Natural killer cell (primary cell): ENCODE measurements at regions of chr20 and their contacts with region 1.

Region 1: GRCh38 chr20:32535953-32536823 is 48.9 kb downstream of the NOL4L start:
- DNase-seq: peak; percentile 63 to 93
- ATAC-seq: peak; percentile 50 to 79 (median 66)
- H3K4me3 ChIP-seq: peak overlapping the region; percentile 38
- H3K4me3 Mint-ChIP-seq: peak overlapping the region; percentile 85
- H3K27ac ChIP-seq: peak overlapping the region; percentile 95
- H3K27ac Mint-ChIP-seq: peak overlapping the region; percentile 89 to 91
- H3K4me1 ChIP-seq: peaks cover 75% of the 10 kb centered on the region
- H3K4me1 Mint-ChIP-seq: peaks cover 66 to 81% of the 10 kb centered on the region in 2 donors
- H3K27me3 ChIP-seq: no peaks in the 10 kb centered on the region
- H3K27me3 Mint-ChIP-seq: no peaks in the 10 kb centered on the region
- CTCF ChIP-seq: no peak

Region 2: DNA sequence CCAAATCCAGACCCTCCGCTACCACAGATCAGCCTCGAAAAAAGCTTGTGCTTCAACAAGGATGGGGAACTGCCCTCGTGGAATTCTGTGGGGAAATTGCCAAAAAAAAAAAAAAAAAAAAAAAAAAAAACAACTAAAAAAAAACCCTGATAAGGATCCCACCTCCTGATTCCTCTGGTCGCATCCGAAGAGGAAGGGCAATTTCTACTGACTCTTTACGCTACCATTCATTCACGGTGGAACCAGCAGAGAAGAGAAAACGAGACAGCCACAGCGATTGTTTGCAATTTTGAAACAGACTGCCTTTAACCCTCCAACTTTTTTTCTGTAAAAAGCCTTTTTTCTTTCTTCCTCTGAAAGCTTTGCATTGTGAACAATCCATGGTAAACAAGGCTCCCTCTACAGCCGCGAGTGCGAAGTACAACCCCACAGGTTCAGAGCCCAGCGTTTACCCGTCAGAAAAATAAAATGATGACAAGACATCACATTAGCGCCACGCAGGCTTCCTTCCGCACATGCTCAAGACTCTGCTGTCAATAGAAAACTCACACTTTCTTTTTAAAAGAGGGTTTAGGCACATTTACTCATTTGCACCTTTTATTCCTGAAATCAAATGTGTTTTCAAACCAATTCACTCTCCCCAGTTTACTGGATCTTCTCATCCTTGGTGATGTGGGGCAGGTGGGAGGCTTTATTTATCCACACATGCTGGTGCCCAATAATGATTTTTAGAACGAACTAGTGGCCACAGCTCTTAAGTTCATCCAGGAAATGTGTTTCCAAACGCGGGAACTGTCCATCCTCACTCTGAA is 51.0 kb before region 1 on chr20:
- intact Hi-C with region 1: loop called (anchors 10 kb)
- DNase-seq: peak; percentile 72 to 92
- ATAC-seq: peak; percentile 79 to 87 (median 79)
- H3K4me3 ChIP-seq: peak overlapping the region; percentile 32
- H3K4me3 Mint-ChIP-seq: peak overlapping the region; percentile 97
- H3K27ac ChIP-seq: peak overlapping the region; percentile 49
- H3K27ac Mint-ChIP-seq: peak overlapping the region; percentile 88 to 91
- H3K4me1 ChIP-seq: peaks cover 34% of the 10 kb centered on the region
- H3K4me1 Mint-ChIP-seq: peaks cover 45 to 59% of the 10 kb centered on the region in 2 donors
- H3K27me3 ChIP-seq: no peaks in the 10 kb centered on the region
- H3K27me3 Mint-ChIP-seq: no peaks in the 10 kb centered on the region
- CTCF ChIP-seq: peak; percentile 74

Region 3: GRCh38 chr20:32521780-32522525 is 14.2 kb before region 1 on chr20:
- intact Hi-C with region 1: loop called (anchors 2 kb)
- DNase-seq: peak; percentile 65 to 86
- ATAC-seq: peak; percentile 74 to 89 (median 89)
- H3K4me3 ChIP-seq: no peak overlapping the region
- H3K4me3 Mint-ChIP-seq: no peak overlapping the region
- H3K27ac ChIP-seq: peak overlapping the region; percentile 22
- H3K27ac Mint-ChIP-seq: peak overlapping the region; percentile 80
- H3K4me1 ChIP-seq: peaks cover 61% of the 10 kb centered on the region
- H3K4me1 Mint-ChIP-seq: peaks cover 52 to 57% of the 10 kb centered on the region in 2 donors
- H3K27me3 ChIP-seq: no peaks in the 10 kb centered on the region
- H3K27me3 Mint-ChIP-seq: no peaks in the 10 kb centered on the region
- CTCF ChIP-seq: peak; percentile 83

Region 4: DNA sequence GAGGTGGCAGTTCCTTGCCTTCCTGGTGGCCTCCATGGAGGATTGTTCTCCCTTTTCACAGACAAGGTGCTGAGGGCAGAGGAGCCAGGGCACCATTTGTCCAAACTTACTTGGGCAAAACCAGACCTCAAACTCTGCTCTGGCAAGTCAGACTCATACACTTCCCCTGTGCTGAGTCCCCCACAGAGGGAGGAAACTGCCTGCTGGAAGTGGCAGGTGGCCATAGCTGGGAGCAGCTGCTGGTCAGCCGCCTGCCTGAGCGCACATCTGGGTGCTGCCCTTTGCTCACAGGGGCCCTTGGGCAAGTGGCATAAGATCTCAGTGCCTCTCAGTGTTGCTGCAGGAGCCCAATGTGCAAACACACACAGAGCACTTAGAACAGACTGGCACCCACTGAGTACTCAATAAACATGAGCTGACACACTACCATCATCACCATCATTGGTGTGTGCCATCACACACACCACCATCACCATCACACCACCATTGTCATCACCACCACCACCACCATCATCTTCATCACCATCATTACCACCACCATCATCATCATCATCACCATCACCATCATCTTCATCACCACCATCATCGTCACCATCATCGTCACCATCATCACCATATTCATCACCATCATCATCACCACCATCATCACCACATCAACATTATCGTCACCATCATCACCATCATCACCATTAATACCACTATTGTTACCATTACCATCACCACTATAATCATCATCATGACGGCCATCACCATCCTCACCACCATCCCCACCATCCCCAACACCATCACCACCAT is 31.4 kb after region 1 on chr20:
- intact Hi-C with region 1: loop called (anchors 1 kb)
- DNase-seq: no peak
- ATAC-seq: peak in 2 of 3 donors; percentile 16 to 32
- H3K4me3 ChIP-seq: no peak overlapping the region
- H3K4me3 Mint-ChIP-seq: no peak overlapping the region
- H3K27ac ChIP-seq: peak overlapping the region; percentile 75
- H3K27ac Mint-ChIP-seq: no peak overlapping the region
- H3K4me1 ChIP-seq: peaks cover 95% of the 10 kb centered on the region
- H3K4me1 Mint-ChIP-seq: peaks cover 27 to 59% of the 10 kb centered on the region in 2 donors
- H3K27me3 ChIP-seq: no peaks in the 10 kb centered on the region
- H3K27me3 Mint-ChIP-seq: no peaks in the 10 kb centered on the region
- CTCF ChIP-seq: no peak

Region 5: DNA sequence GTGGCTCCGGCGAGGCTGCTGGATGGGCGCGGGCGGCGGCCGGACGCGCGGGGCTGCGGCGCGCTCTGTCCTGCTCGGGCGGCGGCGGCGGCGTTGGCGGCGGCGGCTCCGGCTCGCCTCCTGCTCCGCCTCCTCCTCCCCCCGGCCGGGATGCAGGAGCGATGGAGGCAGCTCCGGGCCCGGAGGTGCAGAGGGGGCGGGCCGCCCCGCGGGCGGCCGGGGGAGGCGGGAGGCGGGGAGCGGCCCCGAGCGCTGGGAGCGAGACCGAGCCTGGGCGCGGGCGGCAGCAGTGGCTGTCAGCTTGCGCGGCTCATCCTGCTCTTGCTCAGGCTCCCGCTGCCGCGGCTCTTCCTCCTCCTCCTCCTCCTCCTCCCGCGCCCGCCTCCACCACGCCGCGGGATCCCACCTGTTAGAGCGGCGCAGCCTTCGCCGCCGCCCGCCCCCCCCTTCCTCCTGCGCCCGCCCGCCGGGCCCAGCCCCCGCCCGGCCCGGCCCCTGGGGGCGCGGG is 48.9 kb after region 1 on chr20 and contains the start of gene NOL4L:
- intact Hi-C with region 1: loop called (anchors 5 kb)
- DNase-seq: peak in 1 of 2 donors; percentile 67
- ATAC-seq: peak; percentile 16 to 33 (median 30)
- H3K4me3 ChIP-seq: peak within 1 kb of the TSS; percentile 58
- H3K4me3 Mint-ChIP-seq: peak within 1 kb of the TSS; percentile 96
- H3K27ac ChIP-seq: no peak within 1 kb of the TSS
- H3K27ac Mint-ChIP-seq: peak within 1 kb of the TSS; percentile 80 to 90
- H3K4me1 ChIP-seq: peaks cover 44% of the 10 kb centered on the region
- H3K4me1 Mint-ChIP-seq: peaks cover 41 to 58% of the 10 kb centered on the region in 2 donors
- H3K27me3 ChIP-seq: no peaks in the 10 kb centered on the region
- H3K27me3 Mint-ChIP-seq: no peaks in the 10 kb centered on the region
- CTCF ChIP-seq: no peak
- total RNA-seq, gene NOL4L: 101 to 136 (median 114) TPM